Endothelial cell of umbilical vein (primary cell): ENCODE measurements at regions of chr1 and their contacts with region 1.

Region 1: DNA sequence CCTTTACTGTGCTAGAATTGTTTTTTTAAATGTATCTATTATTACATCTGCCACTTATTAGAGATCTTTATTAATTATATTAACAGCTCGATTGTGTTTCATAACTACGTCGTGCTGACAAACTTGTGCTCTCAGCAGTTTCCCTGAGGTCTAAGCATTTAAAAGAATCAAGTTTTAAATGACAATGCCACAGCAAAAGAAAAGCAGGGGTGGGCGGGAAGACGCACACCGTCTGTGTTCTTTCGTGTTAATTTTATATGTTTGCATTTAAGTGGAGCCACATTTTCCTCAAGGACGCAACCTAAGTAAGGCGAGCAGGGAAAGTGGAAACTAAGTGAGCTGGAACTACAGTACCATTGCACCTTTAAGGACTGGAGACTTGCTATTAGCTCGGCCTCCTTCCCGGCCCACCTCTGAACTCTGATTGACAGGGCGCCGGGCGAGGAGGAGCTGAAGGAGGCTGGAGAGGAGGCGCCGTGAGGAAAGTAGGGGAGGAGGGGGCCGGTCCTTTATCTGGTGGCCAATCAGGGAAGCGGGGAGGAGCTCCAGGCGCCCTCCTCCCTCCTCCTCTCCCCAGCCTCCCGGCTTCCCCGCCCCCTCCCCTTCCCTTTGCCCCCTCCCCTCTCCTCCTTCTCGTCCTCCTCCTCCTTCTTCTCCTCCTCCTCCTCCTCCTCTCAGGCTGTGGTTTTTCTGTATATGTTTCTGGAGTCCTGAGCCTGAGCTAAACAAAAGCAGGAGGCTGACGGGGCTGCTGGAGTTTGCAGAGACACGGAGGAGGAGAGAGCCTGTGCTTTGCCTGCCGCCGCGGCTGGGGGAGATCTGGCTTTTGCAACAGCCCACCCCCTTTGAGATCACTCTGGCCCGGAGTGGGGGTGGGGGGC is at the start of gene PBX1:
- DNase-seq: peak; percentile 99
- H3K4me3 ChIP-seq: peak within 1 kb of the TSS; percentile 88 to 99 (median 99)
- H3K27ac ChIP-seq: peak within 1 kb of the TSS; percentile 68
- H3K4me1 ChIP-seq: peaks cover 40% of the 10 kb centered on the region
- H3K27me3 ChIP-seq: no peaks in the 10 kb centered on the region
- CTCF ChIP-seq: no peak
- POLR2A ChIP-seq: peak; percentile 65
- total RNA-seq, gene PBX1: 22.2 and 24.1 TPM in 2 replicates

Region 2: DNA sequence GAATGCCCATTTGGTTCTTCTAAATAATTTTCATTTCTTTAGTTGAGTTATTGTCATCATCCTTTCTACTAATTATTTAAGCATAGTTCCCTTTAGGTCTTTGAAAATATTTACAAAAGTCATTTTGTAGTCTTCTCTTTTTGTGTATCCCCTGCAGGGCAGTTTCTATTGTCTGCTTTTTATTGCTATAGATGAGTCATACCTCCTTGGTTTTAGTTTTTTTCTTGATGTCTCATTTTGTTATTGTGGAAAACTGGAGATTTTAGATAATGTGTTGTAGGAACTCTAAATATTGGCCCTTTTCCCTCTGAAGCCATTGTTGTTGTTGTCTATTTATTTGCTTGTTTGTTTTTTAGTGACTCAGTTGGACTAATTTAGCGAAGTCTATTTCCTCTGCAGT is 849.1 kb before region 1 on chr1:
- CTCF ChIA-PET with region 1: no interaction called
- POLR2A ChIA-PET with region 1: no interaction called
- dilution Hi-C with region 1: no loop called
- intact Hi-C with region 1: loop called (anchors 5 kb)
- DNase-seq: peak; percentile 72
- H3K4me3 ChIP-seq: no peak overlapping the region
- H3K27ac ChIP-seq: peak overlapping the region; percentile 34
- H3K4me1 ChIP-seq: peaks cover 33% of the 10 kb centered on the region
- H3K27me3 ChIP-seq: no peaks in the 10 kb centered on the region
- CTCF ChIP-seq: no peak
- POLR2A ChIP-seq: no peak

Region 3: GRCh38 chr1:164524810-164525209 is 33.9 kb before region 1 on chr1:
- CTCF ChIA-PET with region 1: no interaction called
- POLR2A ChIA-PET with region 1: no interaction called
- dilution Hi-C with region 1: no loop called
- intact Hi-C with region 1: no loop called
- DNase-seq: no peak
- H3K4me3 ChIP-seq: no peak overlapping the region
- H3K27ac ChIP-seq: no peak overlapping the region
- H3K4me1 ChIP-seq: no peaks in the 10 kb centered on the region
- H3K27me3 ChIP-seq: no peaks in the 10 kb centered on the region
- CTCF ChIP-seq: no peak
- POLR2A ChIP-seq: no peak

Region 4: DNA sequence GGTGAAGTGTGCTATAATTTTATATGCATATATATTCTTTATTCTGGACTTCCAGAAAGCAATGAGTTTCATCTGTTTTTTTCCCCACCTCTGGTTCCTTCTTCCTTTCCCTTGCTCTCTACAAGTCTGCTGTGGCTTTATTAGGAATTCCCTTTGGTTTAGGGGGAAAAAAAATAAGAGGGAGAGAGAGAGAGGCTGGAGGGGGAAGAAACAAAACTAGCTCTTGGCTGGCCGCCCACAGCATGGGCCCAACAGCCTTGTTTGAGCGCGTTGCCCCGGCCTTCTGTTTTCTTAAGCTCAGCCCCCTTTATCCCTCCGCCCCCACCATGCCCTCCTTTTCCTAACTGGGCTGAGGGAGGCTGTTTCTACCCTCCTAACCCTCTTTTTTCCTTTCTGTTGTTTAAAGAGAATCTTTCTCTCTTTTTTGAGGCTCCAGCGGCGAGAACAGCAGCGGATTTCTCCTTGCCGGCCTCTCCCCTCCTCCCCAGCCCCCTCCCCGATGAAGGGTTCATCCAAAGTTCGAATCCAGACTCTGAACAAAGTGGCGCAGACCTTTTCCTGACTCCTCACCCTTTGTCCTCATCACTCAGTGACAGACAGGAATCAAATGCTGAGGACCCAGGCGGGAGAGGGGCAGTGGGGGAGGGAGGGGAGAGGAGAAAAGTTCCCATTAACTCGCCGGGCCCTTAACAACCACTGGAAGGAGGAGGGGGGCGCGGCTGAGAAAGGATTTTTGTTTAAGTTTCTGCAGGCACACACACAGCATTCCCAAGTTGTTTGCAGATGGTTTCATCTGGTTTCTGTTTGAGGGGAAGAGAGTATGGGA is 30.0 kb after region 1 on chr1:
- CTCF ChIA-PET with region 1: no interaction called
- POLR2A ChIA-PET with region 1: interaction called, 3 read pairs
- dilution Hi-C with region 1: no loop called
- intact Hi-C with region 1: loop called (anchors 1 kb)
- DNase-seq: peak; percentile 77
- H3K4me3 ChIP-seq: peak overlapping the region in 1 of 3 experiments; percentile 16
- H3K27ac ChIP-seq: no peak overlapping the region
- H3K4me1 ChIP-seq: no peaks in the 10 kb centered on the region
- H3K27me3 ChIP-seq: no peaks in the 10 kb centered on the region
- CTCF ChIP-seq: no peak
- POLR2A ChIP-seq: no peak

Region 5: DNA sequence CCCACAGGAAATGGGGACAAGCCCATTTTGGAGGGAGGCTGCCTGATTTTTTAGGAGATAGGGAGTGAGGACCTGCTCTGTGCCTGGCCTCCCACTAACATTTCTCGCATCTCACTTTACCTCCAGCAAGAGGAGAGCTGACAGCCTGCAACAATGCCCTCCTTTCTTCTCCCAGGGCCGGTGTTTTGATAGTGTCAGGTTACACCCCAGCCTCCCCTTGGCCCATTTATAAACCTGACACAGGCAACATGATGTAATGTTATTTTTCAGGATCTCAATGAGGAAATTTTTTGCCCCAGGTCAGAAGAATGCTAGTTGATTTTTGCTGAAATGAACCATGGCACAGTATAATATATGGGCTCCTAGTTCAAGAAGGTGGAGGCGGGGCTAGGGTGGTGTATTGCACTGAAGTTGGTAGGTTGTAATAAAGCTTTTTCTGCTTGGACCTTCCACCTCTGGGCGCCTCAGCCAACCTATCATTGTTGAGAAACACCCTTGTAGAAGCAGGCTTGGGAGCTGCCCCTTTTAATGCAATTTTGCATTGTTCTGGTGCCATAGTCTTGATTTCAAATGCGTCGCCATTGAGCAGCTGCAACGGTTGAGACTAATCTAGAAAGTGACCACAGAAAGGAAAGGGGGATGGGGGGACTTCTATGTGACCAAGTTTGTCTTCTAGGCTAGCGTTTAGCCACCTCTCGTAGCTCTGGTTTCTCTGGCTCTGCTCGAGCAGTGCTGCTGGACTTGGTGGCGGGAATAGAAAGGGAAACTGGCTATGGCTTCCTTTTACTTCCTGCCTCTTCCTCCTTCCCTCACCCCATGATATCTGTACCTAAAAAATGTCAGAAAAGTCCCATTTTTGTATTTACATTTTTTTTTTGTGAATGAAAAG is 53.3 kb after region 1 on chr1:
- CTCF ChIA-PET with region 1: interaction called, 7 read pairs
- POLR2A ChIA-PET with region 1: interaction called, 7 read pairs
- dilution Hi-C with region 1: no loop called
- intact Hi-C with region 1: loop called (anchors 1 kb)
- DNase-seq: peak; percentile 89
- H3K4me3 ChIP-seq: no peak overlapping the region
- H3K27ac ChIP-seq: no peak overlapping the region
- H3K4me1 ChIP-seq: peaks cover 7% of the 10 kb centered on the region
- H3K27me3 ChIP-seq: no peaks in the 10 kb centered on the region
- CTCF ChIP-seq: no peak
- POLR2A ChIP-seq: no peak

Region 6: DNA sequence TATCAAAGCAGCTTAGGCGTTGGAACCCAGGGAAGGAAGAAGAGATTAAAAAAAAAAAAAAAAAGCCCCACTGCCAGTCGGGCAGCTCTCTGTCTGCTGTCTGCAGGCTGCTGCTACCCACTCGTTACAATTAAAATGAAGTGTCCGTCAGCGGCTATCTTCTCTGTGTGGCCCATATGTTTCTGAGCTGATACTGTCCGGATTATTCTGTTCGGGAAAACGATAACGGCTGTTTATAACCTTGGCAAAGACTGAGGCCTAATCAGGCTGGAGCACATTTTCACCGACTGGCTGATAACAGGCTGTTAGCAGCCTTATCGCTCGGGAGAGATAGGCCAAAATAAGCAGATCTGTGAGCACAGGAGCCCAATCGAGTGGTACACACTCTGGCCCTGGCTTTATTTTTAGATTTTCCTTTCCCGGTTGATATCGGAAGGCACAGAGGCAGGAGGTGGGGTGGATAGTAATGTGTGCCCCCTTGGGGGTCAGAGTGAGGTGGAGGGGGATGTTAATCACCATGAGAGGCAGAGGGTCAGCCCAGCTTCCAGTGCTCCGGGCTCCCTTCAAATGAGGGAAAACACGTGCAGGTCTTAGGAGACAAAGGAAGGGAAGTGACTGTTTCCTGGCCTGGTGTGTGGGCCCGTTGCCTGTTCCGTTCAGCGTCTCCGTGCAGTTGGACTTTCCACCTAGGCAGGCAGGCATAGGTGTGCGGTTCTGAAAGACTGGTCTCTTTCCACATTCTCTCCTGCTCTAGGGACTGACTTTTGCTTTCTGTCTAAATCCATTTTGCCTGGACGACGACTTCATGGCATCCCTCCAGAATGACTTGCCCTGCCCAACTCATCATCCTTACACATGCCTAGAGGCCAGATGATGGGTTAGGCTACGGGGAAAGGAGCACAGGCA is 153.7 kb after region 1 on chr1:
- CTCF ChIA-PET with region 1: no interaction called
- POLR2A ChIA-PET with region 1: interaction called, 3 read pairs
- dilution Hi-C with region 1: no loop called
- intact Hi-C with region 1: loop called (anchors 2 kb)
- DNase-seq: peak; percentile 100
- H3K4me3 ChIP-seq: no peak overlapping the region
- H3K27ac ChIP-seq: peak overlapping the region; percentile 29
- H3K4me1 ChIP-seq: peaks cover 26% of the 10 kb centered on the region
- H3K27me3 ChIP-seq: no peaks in the 10 kb centered on the region
- CTCF ChIP-seq: no peak
- POLR2A ChIP-seq: peak; percentile 73